Heart right ventricle (tissue), 16 donors: ENCODE measurements at regions of chr11 and their contacts with region 1.

Region 1: GRCh38 chr11:12331239-12331874 is 46.0 kb upstream of the PARVA start:
- DNase-seq: peak; percentile 74 to 88
- ATAC-seq: peak; percentile 73 to 88 (median 84)
- H3K4me3 ChIP-seq: no peak overlapping the region
- H3K27ac ChIP-seq: no peak overlapping the region
- H3K4me1 ChIP-seq: peaks cover 0 to 8% (median 4%) of the 10 kb centered on the region in 9 donors
- H3K27me3 ChIP-seq: no peaks in the 10 kb centered on the region
- CTCF ChIP-seq: peak; percentile 42 to 89 (median 81)

Region 2: GRCh38 chr11:12174477-12175143 is 156.7 kb before region 1 on chr11:
- intact Hi-C with region 1: no loop called
- DNase-seq: no peak
- ATAC-seq: no peak
- H3K4me3 ChIP-seq: no peak overlapping the region
- H3K27ac ChIP-seq: peak overlapping the region in 1 of 10 donors; percentile 46
- H3K4me1 ChIP-seq: peaks cover 4 to 64% (median 44%) of the 10 kb centered on the region in 9 donors
- H3K27me3 ChIP-seq: no peaks in the 10 kb centered on the region
- CTCF ChIP-seq: no peak

Region 3: DNA sequence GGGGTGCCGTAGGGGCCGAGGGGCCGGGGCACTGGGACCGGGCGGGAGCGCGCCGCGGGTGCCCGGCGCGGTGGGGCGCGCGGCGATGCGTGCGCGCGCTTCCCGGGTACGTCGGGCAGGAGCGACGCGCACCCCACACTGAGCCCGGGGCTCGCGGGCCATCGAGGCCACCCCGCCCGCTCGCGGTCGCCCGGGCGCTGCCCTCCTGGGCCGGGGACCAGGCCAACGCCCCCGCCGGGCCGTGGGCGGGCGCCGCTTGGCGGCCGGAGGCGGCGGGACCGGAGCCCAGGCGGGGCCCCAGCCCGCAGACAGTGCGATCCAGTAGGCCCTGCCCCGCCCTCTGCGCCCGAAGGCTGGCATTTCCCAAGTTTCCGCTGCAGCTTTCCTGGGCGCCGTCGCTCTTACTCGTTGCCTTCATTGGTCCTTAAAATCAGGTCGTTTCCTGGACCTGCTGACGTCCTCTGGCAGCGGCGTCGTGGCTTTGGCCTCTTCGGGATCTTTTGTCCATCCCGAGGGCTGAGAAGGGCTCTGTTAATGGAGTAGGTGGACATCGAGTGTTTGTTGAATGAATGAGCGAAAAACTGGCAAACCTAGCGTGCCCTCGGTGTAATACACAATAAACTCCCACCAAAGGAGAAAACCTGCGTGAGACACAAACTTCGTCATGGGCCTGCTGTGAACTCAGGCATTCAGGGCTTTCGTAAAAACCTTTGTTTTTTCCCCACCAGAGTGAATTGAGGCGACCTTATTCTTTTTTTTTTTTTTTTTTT is 46.7 kb after region 1 on chr11:
- intact Hi-C with region 1: no loop called
- DNase-seq: peak; percentile 51 to 74
- ATAC-seq: peak; percentile 54 to 88 (median 68)
- H3K4me3 ChIP-seq: peak overlapping the region; percentile 56 to 97 (median 72)
- H3K27ac ChIP-seq: peak overlapping the region; percentile 93 to 99 (median 98)
- H3K4me1 ChIP-seq: peaks cover 5 to 76% (median 49%) of the 10 kb centered on the region in 9 donors
- H3K27me3 ChIP-seq: peaks cover 0 to 28% (median 0%) of the 10 kb centered on the region in 7 donors
- CTCF ChIP-seq: peak in 4 of 9 donors; percentile 18 to 43 (median 34)

Region 4: GRCh38 chr11:12404436-12404835 is 73.1 kb after region 1 on chr11:
- intact Hi-C with region 1: loop called in 1 of 10 experiments (anchors 5 kb)
- DNase-seq: peak in 1 of 2 donors; percentile 45
- ATAC-seq: peak in 4 of 8 donors; percentile 6 to 39 (median 29)
- H3K4me3 ChIP-seq: no peak overlapping the region
- H3K27ac ChIP-seq: no peak overlapping the region
- H3K4me1 ChIP-seq: peaks cover 0 to 78% (median 41%) of the 10 kb centered on the region in 9 donors
- H3K27me3 ChIP-seq: no peaks in the 10 kb centered on the region
- CTCF ChIP-seq: no peak

Region 5: DNA sequence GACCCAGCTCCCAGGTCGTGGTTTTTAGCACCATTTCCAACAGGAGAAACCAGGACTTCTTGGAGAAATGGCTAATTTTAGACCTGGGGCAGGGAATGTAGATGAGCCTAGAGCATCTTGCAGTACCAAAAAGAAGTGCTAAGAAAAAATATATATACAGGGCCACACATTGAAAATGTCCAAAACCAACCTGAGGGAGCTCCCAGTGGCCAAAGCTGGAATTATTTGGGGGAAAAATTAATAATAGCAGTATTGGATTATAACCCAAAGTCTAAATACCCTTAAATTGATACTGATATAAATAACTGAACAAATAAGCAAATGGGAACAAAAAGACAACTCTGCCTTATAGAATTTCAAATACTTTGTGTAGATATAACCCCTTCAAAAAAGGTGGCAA is 154.0 kb after region 1 on chr11:
- intact Hi-C with region 1: loop called in 4 of 10 experiments (anchors 10 kb)
- DNase-seq: no peak
- ATAC-seq: no peak
- H3K4me3 ChIP-seq: no peak overlapping the region
- H3K27ac ChIP-seq: no peak overlapping the region
- H3K4me1 ChIP-seq: peaks cover 2 to 22% (median 14%) of the 10 kb centered on the region in 9 donors
- H3K27me3 ChIP-seq: no peaks in the 10 kb centered on the region
- CTCF ChIP-seq: peak in 8 of 9 donors; percentile 13 to 44 (median 32)

Region 6: GRCh38 chr11:12888525-12889158 is 557.3 kb after region 1 on chr11:
- intact Hi-C with region 1: loop called (anchors 2 to 5 kb)
- DNase-seq: peak; percentile 85 to 90
- ATAC-seq: peak; percentile 75 to 91 (median 84)
- H3K4me3 ChIP-seq: no peak overlapping the region
- H3K27ac ChIP-seq: peak overlapping the region in 9 of 10 donors; percentile 48 to 83 (median 65)
- H3K4me1 ChIP-seq: peaks cover 10 to 50% (median 30%) of the 10 kb centered on the region in 9 donors
- H3K27me3 ChIP-seq: no peaks in the 10 kb centered on the region
- CTCF ChIP-seq: peak; percentile 63 to 87 (median 76)

Region 7: DNA sequence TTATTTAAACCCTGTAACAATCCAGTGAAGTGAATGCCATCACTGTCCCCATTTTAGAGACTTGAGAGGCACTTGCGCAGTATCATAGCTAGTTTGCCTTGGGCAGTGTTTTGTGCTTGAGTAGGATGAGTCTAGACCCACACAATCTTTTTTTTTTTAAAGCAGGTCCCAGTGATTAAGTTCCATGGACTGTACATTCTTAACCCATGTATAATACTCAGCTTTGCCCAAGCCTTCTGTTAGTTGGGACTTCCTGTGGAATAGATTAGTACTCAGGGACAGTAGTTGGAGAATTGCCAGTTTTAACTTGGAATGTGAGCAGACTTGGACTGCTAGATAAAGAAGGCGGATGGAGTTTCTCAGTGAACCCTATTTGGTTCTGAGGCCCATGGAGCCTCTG is 569.1 kb after region 1 on chr11:
- intact Hi-C with region 1: loop called in 3 of 10 experiments (anchors 2 to 5 kb)
- DNase-seq: no peak
- ATAC-seq: peak in 7 of 8 donors; percentile 25 to 66 (median 53)
- H3K4me3 ChIP-seq: no peak overlapping the region
- H3K27ac ChIP-seq: peak overlapping the region in 7 of 10 donors; percentile 42 to 90 (median 83)
- H3K4me1 ChIP-seq: peaks cover 0 to 37% (median 28%) of the 10 kb centered on the region in 9 donors
- H3K27me3 ChIP-seq: no peaks in the 10 kb centered on the region
- CTCF ChIP-seq: no peak